CD4-positive, alpha-beta memory T cell (primary cell): ENCODE measurements at regions of chr19 and their contacts with region 1.

Region 1: DNA sequence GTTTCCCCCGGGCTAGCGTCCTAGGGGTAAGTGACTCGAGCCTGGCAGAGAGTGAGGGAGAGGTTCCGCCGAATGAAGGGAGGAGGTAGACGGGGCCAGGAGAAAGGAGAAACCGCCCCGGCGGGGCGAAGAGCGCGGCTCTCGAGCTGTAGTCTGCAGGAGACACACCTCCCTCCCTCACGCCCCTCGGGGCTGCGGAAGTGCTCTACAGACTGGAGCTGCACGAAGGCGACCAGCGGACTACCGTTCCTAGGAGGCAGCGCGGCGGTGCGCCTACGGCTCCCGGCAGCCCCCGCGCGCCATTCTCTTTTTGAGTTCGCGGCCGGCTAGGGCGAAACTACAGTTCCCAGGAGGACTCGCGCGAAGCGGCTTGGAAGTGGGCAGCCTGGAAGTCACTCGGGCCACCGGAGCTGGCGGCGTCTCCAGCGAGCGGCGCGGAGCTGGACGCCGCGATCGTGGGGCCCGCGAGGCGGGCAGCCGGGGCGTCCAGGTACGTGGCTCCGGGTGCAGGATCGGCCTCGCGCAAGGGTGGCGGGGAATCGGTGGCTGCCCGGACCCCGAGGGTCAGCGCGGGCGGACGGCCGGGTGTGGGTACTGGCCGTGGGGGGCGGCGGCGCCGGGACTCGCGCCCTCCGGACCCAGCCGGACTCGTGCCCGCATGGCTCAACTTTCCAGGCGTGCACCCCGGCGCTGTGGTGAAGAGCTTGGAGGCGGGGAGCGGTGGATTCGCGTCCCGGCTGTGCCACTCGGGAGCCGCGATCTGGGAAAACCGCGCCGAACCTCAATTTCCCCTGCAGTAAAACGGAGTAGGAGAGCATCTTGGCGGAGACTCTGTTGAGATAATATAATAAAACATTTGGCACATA is at the start of gene SIPA1L3:
- DNase-seq: peak; percentile 89 to 92 (median 90)
- H3K4me3 ChIP-seq: peak within 1 kb of the TSS; percentile 63 to 96
- H3K4me3 Mint-ChIP-seq: peak within 1 kb of the TSS; percentile 92 to 96 (median 93)
- H3K27ac ChIP-seq: peak within 1 kb of the TSS; percentile 71
- H3K27ac Mint-ChIP-seq: peak within 1 kb of the TSS; percentile 86 to 95 (median 91)
- H3K4me1 ChIP-seq: peaks cover 22% of the 10 kb centered on the region
- H3K4me1 Mint-ChIP-seq: peaks cover 16 to 36% (median 25%) of the 10 kb centered on the region in 4 donors
- H3K27me3 ChIP-seq: no peaks in the 10 kb centered on the region
- H3K27me3 Mint-ChIP-seq: no peaks in the 10 kb centered on the region
- total RNA-seq, gene SIPA1L3: 31.8 to 35.0 TPM

Region 2: GRCh38 chr19:37506387-37507166 is 400.5 kb before region 1 on chr19 and contains the start of gene ZNF793:
- CTCF ChIA-PET with region 1: no interaction called
- POLR2A ChIA-PET with region 1: no interaction called
- intact Hi-C with region 1: loop called (anchors 5 kb)
- DNase-seq: peak; percentile 85 to 88 (median 87)
- H3K4me3 ChIP-seq: peak within 1 kb of the TSS; percentile 57 to 78
- H3K4me3 Mint-ChIP-seq: no peak within 1 kb of the TSS
- H3K27ac ChIP-seq: peak within 1 kb of the TSS; percentile 88
- H3K27ac Mint-ChIP-seq: no peak within 1 kb of the TSS
- H3K4me1 ChIP-seq: peaks cover 17% of the 10 kb centered on the region
- H3K4me1 Mint-ChIP-seq: peaks cover 0 to 2% (median 0%) of the 10 kb centered on the region in 4 donors
- H3K27me3 ChIP-seq: no peaks in the 10 kb centered on the region
- H3K27me3 Mint-ChIP-seq: no peaks in the 10 kb centered on the region
- total RNA-seq, gene ZNF793: 10.2 to 13.8 TPM

Region 3: GRCh38 chr19:37803250-37803854 is 103.8 kb before region 1 on chr19:
- CTCF ChIA-PET with region 1: no interaction called
- POLR2A ChIA-PET with region 1: no interaction called
- intact Hi-C with region 1: no loop called
- DNase-seq: no peak
- H3K4me3 ChIP-seq: no peak overlapping the region
- H3K4me3 Mint-ChIP-seq: no peak overlapping the region
- H3K27ac ChIP-seq: no peak overlapping the region
- H3K27ac Mint-ChIP-seq: no peak overlapping the region
- H3K4me1 ChIP-seq: no peaks in the 10 kb centered on the region
- H3K4me1 Mint-ChIP-seq: no peaks in the 10 kb centered on the region
- H3K27me3 ChIP-seq: no peaks in the 10 kb centered on the region
- H3K27me3 Mint-ChIP-seq: no peaks in the 10 kb centered on the region

Region 4: DNA sequence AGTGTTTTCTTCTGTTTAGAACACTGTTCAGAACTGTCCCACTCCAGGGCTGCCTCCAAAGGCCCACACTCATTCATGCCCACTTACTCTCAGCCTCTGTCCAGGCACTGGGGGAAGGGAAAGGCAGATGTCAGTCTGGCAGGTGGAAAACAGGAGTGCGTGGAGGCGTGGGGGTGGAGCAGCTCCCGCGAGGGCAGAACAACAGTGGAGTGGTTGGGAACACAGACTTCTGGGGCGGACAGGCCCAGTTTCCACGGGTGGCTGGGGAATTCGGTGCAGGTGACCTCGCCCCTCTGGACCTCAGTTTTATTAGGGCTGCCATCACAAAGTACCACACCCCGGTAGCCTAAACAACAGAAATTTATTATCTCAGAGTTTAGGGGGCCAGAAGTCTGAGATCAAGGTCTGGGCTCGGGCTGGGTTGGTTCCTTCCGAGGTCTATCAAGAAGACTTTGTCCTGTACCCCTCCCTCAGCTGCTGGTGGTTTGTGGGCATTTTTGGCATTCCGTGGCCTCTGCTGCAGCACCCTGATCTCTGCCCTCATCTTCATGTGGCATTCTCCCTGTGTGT is 59.6 kb after region 1 on chr19:
- CTCF ChIA-PET with region 1: no interaction called
- POLR2A ChIA-PET with region 1: no interaction called
- intact Hi-C with region 1: no loop called
- DNase-seq: no peak
- H3K4me3 ChIP-seq: no peak overlapping the region
- H3K4me3 Mint-ChIP-seq: no peak overlapping the region
- H3K27ac ChIP-seq: no peak overlapping the region
- H3K27ac Mint-ChIP-seq: no peak overlapping the region
- H3K4me1 ChIP-seq: no peaks in the 10 kb centered on the region
- H3K4me1 Mint-ChIP-seq: peaks cover 0 to 6% (median under 1%) of the 10 kb centered on the region in 4 donors
- H3K27me3 ChIP-seq: no peaks in the 10 kb centered on the region
- H3K27me3 Mint-ChIP-seq: no peaks in the 10 kb centered on the region

Region 5: GRCh38 chr19:38089440-38089839 is 182.3 kb after region 1 on chr19:
- CTCF ChIA-PET with region 1: interaction called, 11 read pairs
- POLR2A ChIA-PET with region 1: no interaction called
- intact Hi-C with region 1: no loop called
- DNase-seq: no peak
- H3K4me3 ChIP-seq: no peak overlapping the region
- H3K4me3 Mint-ChIP-seq: no peak overlapping the region
- H3K27ac ChIP-seq: no peak overlapping the region
- H3K27ac Mint-ChIP-seq: peak overlapping the region in 1 of 7 donors; percentile 66
- H3K4me1 ChIP-seq: no peaks in the 10 kb centered on the region
- H3K4me1 Mint-ChIP-seq: no peaks in the 10 kb centered on the region
- H3K27me3 ChIP-seq: no peaks in the 10 kb centered on the region
- H3K27me3 Mint-ChIP-seq: no peaks in the 10 kb centered on the region

Region 6: DNA sequence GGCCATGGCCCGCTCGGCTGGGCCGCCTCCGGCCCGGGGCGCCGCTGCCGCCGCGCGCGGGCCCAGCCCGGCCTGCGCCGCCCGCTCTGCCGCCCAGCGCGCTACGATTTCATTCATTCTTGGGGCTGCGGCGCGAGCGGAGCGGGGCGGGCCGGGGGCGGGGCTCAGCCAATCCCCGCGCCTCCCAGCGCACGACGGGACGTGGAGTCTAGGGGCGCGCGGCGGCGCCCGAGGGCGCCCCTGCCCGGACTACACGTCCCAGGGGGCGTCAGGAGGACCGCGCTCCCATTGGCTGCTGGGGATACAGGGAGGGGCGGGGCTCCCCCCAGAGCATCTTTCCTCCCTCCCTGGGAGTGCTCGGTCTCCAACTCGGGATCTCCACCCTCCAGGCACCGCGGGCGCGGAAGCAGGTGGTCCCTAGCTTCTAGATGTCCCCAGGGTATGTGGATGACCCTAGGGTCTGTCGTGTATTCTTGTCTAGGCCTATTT is 322.5 kb after region 1 on chr19:
- CTCF ChIA-PET with region 1: interaction called, 18 read pairs
- POLR2A ChIA-PET with region 1: no interaction called
- intact Hi-C with region 1: loop called (anchors 5 kb)
- DNase-seq: peak; percentile 45 to 61 (median 52)
- H3K4me3 ChIP-seq: no peak overlapping the region
- H3K4me3 Mint-ChIP-seq: peak overlapping the region in 7 of 8 donors; percentile 40 to 73 (median 62)
- H3K27ac ChIP-seq: no peak overlapping the region
- H3K27ac Mint-ChIP-seq: peak overlapping the region in 3 of 7 donors; percentile 44 to 75 (median 47)
- H3K4me1 ChIP-seq: peaks cover 8% of the 10 kb centered on the region
- H3K4me1 Mint-ChIP-seq: peaks cover 3 to 14% (median 8%) of the 10 kb centered on the region in 4 donors
- H3K27me3 ChIP-seq: peaks cover 30% of the 10 kb centered on the region
- H3K27me3 Mint-ChIP-seq: peaks cover 31 to 32% of the 10 kb centered on the region in 2 donors

Region 7: DNA sequence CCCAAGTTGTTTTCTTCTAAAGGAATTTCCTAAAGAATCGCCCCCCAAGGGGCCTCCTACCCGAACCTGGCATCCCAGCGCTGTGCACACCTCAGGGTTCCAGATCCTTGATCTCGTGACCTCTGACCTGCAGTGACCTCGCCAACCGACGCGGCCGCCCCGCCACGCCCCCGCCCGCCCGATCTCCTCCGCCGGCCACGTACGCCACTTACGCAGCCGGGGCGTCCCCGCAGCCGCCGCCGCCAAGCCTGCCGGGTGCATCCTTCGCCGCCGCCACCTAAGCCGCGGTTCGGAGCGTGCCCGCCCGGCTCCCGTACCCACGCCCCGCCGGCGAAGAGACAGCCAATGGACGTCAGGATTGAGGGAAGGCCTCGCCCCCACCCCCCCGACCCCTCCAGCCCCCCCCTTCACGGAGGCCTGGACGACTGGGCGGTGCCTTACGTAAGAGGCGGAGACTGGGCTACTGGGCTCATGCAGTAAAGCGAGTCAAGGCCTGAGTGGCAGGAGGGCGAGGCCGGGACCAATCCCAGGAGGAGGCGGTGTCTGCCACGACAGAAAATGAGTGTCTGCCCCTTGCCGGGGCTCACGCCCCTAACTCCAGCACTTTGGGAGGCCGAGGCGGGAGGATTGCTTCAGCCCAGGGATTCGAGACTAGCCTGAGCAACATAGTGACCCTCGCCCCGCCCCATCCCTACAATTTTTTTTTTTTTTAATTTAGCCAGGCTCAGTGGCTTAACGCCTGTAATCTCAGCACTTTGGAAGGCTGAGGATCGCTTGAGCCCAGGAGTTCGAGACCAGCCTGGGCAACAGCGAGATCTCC is 408.8 kb after region 1 on chr19 and contains the start of gene YIF1B:
- CTCF ChIA-PET with region 1: no interaction called
- POLR2A ChIA-PET with region 1: interaction called, 3 read pairs
- intact Hi-C with region 1: loop called (anchors 5 kb)
- DNase-seq: peak; percentile 96 to 98 (median 96)
- H3K4me3 ChIP-seq: peak within 1 kb of the TSS; percentile 83 to 97
- H3K4me3 Mint-ChIP-seq: peak within 1 kb of the TSS; percentile 80 to 98 (median 94)
- H3K27ac ChIP-seq: peak within 1 kb of the TSS; percentile 91
- H3K27ac Mint-ChIP-seq: peak within 1 kb of the TSS; percentile 89 to 99 (median 96)
- H3K4me1 ChIP-seq: peaks cover 40% of the 10 kb centered on the region
- H3K4me1 Mint-ChIP-seq: peaks cover 23 to 64% (median 44%) of the 10 kb centered on the region in 4 donors
- H3K27me3 ChIP-seq: no peaks in the 10 kb centered on the region
- H3K27me3 Mint-ChIP-seq: no peaks in the 10 kb centered on the region
- total RNA-seq, gene YIF1B: 35.8 to 38.4 TPM